Activated CD4-positive, alpha-beta T cell treated with anti-CD3 and anti-CD28 coated beads for 36 hours (primary cell): ENCODE measurements at regions of chr6 and their contacts with region 1.

Region 1: GRCh38 chr6:149863697-149864577 is at the start of gene LRP11:
- DNase-seq: peak; percentile 91
- ATAC-seq: peak; percentile 88
- H3K4me3 Mint-ChIP-seq: peak within 1 kb of the TSS; percentile 68
- H3K27ac Mint-ChIP-seq: peak within 1 kb of the TSS; percentile 16
- H3K4me1 Mint-ChIP-seq: peaks cover 10% of the 10 kb centered on the region
- H3K27me3 Mint-ChIP-seq: peaks cover 9% of the 10 kb centered on the region
- total RNA-seq, gene LRP11: 5.1 TPM

Region 2: DNA sequence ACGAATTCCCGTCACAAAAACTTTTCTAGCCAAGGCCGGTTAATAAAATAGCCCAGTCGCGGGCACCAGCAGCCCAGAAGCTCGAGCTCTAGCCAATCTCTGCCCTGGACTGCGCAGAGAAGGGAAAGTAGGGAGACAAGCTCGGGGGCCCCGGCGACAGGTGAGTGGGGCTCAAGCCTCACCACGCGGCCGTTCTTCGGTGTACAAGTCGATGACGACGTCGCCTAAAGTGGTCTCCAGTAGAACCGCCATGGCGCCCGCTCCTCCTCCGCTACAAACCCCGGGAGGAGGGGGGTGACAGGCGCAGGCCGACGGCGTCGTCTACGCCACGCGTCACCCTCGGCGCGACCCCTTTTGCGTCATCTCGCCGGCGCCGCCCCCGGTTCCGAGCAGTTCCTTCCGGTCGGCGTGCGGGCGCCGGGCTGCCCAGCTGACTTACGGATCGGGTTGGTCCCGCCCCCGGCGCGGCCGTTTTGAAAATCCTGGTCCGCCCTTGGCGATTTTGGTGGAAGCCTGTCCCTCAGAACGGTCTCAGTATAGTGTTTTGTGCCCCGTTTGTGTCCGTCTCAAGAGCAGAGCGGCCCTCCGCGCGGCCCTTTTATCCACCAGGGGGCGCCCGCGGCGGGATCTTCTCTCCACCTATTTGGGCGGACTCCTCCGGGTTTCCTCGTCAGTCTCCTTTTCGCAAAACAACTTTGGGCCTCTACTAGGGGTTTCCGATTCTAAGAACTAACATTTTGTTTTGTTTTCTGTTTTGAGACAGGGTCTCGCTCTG is 318.0 kb before region 1 on chr6 and contains the start of gene PPIL4:
- CTCF ChIA-PET with region 1: no interaction called
- POLR2A ChIA-PET with region 1: no interaction called
- intact Hi-C with region 1: loop called in 1 of 2 experiments (anchors 1 kb)
- DNase-seq: peak; percentile 98
- ATAC-seq: peak; percentile 85
- H3K4me3 Mint-ChIP-seq: peak within 1 kb of the TSS; percentile 97
- H3K27ac Mint-ChIP-seq: peak within 1 kb of the TSS; percentile 98
- H3K4me1 Mint-ChIP-seq: peaks cover 42% of the 10 kb centered on the region
- H3K27me3 Mint-ChIP-seq: no peaks in the 10 kb centered on the region
- total RNA-seq, gene PPIL4: 22.6 to 26.8 TPM

Region 3: DNA sequence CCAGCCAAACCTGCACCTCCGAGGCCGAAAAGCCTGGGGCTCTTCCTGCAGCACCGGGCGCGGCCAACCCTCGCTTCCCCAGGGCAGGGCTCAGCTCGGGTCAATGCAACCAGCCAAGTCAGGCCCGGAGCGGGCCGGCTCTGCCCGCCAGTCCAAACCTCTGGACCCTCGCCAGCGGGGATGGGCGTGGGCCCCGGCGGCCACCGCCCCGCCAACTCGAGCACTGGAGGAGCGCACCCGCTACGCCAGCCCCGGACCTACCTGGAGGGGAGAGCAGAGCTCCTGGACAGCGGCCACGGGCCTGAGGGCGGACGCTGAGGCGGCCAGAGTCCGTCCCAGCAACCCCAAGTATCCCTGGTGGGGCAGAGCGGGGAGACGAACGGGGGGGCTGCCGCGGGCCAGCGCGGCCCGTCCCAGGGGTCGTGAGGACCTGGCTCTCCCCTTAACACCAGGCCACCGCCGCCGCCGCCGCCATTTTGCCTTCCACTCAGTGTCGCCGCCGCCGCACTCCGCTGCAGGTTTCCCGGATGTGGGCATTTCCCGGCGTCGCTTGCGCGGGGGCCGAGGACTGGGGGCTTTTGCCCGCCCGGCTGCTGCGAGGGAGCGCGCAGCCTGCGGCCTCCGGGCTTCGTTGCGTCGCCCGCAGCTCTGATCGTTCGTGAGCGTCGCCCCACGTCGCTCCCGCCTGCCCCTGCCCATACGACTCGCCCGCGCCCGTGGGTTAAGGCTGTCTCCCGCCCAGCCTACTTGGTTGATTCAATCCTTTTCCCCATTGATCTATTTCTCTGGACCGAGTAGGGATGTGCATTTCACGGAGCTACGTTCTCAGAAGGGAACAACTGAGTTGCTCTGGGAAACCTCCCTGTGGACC is 146.1 kb before region 1 on chr6 and contains the start of gene LATS1:
- CTCF ChIA-PET with region 1: no interaction called
- POLR2A ChIA-PET with region 1: no interaction called
- intact Hi-C with region 1: loop called (anchors 2 to 10 kb)
- DNase-seq: peak; percentile 97
- ATAC-seq: peak; percentile 93
- H3K4me3 Mint-ChIP-seq: peak within 1 kb of the TSS; percentile 88
- H3K27ac Mint-ChIP-seq: peak within 1 kb of the TSS; percentile 98
- H3K4me1 Mint-ChIP-seq: peaks cover 25% of the 10 kb centered on the region
- H3K27me3 Mint-ChIP-seq: no peaks in the 10 kb centered on the region
- total RNA-seq, gene LATS1: 21.2 to 23.5 TPM

Region 4: DNA sequence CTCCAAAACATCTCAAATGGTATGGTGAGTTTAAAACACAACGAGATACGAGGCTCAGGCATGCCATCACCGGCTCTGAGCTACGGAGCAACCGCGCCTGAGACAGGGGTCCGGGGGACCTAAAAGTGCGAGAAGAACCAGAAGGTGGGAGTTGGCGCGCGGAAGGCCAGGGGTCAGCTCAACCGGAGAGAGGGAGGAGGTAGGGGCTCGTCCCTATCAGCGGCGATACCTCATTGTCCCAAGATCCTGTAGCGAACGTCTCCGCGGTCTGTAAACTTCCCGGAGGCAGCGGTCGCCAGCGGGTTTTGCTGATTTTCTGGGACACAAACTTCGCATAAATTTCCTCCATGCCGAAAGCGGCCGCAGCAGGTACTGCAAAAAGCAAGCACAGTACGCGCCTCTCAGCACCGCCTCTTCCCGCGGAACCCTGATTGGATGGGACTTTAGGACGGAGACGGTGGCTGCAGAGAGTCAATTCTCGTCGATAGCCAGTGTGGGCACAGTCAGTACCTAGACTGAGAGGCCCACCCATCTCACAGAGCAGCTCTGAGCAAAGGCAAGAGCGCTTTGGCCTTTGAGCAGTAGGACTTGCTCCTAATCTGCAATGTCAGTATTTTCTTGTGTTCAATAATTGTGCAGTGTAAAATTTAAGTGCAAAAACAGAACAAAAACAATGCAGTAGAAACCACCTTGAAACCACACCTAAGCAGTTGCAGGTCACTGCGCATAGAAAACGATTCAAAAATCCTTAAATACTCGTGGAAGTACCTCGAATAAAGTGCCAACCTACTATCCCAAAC is 117.6 kb before region 1 on chr6 and contains the start of gene NUP43:
- CTCF ChIA-PET with region 1: interaction called, 3 read pairs
- POLR2A ChIA-PET with region 1: interaction called, 4 read pairs
- intact Hi-C with region 1: loop called in 1 of 2 experiments (anchors 1 kb)
- DNase-seq: peak; percentile 96
- ATAC-seq: peak; percentile 67
- H3K4me3 Mint-ChIP-seq: peak within 1 kb of the TSS; percentile 98
- H3K27ac Mint-ChIP-seq: peak within 1 kb of the TSS; percentile 96
- H3K4me1 Mint-ChIP-seq: peaks cover 27% of the 10 kb centered on the region
- H3K27me3 Mint-ChIP-seq: no peaks in the 10 kb centered on the region
- total RNA-seq, gene NUP43: 80.5 to 89.4 TPM

Region 5: DNA sequence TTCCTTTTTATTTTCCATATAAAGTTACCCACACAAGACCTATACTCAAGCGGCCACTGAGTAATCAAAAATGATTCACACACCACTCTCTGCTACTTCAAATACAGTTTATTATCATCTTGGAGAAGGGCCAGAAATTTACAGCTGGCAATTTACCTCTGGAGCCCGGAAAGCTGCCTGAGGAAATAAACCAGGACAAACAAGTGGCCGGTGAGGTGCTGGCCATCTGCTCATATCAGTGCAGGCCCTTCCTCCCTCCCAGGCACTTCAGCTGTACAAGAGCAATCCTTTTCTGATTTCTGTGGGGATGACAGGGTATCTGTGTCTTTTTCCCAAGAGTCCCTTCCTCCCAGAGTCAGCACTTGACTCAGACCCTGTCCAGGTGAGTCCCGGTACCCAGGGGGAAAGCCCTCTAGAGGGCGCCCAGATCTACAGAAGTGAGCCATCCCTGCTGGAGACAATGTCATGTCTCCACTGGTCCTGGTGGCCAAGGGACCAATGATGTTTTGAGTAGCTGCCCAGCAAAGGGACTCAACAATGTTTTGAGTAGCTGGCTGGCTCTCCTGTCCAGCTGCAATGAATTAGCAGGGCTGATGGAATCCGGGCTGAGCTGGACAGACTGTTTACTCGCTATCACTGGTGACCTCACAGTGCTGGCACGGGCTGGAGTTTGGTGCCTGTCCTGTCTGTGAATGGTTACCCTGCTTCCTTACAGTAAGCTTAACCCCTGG is 23.4 kb before region 1 on chr6:
- CTCF ChIA-PET with region 1: interaction called, 7 read pairs
- POLR2A ChIA-PET with region 1: no interaction called
- intact Hi-C with region 1: loop called in 1 of 2 experiments (anchors 1 kb)
- DNase-seq: peak; percentile 79
- ATAC-seq: peak; percentile 73
- H3K4me3 Mint-ChIP-seq: no peak overlapping the region
- H3K27ac Mint-ChIP-seq: no peak overlapping the region
- H3K4me1 Mint-ChIP-seq: no peaks in the 10 kb centered on the region
- H3K27me3 Mint-ChIP-seq: peaks cover 1% of the 10 kb centered on the region

Region 6: DNA sequence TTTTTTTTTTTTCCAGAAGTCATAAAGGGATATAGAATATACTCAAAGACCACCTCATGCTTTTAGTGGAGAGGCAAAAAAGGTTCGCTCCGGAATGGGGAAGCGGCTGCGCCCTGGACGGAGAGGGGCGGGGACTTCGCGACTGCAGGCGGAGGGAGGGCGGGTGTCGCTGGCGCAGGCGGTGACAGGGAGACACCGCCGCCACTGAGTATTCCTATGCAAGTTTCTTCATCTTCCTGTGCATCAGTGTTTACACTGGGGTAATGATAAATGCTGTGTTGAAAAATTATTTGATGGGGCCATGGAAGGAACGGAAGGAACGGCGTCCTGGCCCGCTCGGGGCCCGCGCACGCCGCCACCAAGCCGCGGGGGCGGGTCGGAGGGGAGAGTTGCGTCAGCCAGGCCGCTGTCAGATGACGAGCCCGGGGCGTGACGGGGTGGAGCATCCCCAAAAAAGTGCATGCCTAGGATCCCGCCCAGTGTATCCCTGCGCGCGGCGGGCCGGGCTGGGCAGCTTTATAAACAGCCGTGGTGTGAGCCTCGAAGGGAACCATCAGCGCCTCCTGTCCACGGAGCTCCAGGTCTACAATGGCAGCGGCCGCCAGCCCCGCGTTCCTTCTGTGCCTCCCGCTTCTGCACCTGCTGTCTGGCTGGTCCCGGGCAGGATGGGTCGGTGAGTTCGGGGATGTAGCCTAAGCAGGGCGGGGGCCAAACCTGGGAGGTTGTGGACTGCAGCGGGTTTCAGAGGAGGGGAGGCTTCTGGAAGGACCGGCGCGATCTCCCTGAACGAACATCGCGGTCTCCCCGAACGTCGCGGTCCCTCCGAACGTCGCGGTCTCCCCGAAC is 99.7 kb after region 1 on chr6 and contains the start of gene ULBP1:
- CTCF ChIA-PET with region 1: no interaction called
- POLR2A ChIA-PET with region 1: no interaction called
- intact Hi-C with region 1: loop called in 1 of 2 experiments (anchors 1 kb)
- DNase-seq: peak; percentile 93
- ATAC-seq: peak; percentile 76
- H3K4me3 Mint-ChIP-seq: peak within 1 kb of the TSS; percentile 77
- H3K27ac Mint-ChIP-seq: peak within 1 kb of the TSS; percentile 91
- H3K4me1 Mint-ChIP-seq: peaks cover 22% of the 10 kb centered on the region
- H3K27me3 Mint-ChIP-seq: peaks cover 69% of the 10 kb centered on the region
- total RNA-seq, gene ULBP1: 2.7 to 5.0 TPM